H1 (cell line): ENCODE measurements at regions of chr1 and their contacts with region 1.

Region 1: DNA sequence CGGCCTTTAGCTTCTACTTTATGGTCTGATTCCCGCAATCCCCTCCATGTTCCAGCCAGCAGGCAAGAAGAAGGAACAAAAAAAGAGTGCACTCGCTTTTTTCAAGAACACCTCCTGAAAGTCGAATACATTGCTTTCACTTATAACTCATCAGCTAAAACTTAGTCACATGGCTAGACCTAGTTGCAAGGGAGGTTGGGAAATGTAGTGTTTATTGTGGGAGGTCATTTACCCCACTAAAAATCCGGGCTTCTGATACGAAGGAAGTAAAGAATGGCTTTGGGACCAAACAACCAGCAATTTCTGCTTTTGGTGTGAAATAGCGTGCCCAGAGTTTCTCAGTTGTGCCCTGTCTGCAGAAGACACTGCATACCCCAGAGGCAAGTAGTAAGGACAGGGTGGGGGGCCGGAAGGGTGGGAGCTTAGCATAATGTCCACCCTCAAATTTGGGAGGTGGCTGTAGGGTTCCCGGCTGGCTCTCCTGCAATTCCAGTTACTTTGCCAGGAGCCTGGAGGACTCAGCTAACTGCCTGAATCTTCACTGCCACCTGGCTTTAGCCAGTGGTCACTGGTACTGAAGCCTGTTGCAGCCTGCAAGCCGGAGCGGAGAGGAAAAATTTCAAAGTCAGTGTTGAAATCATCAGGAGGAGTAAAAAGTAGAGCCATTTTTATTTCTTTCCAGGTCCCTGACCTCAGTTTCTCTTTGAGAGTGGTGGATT is 57.7 kb upstream of the F3 start:
- DNase-seq: peak in 1 of 2 experiments; percentile 54
- H3K4me3 ChIP-seq: no peak overlapping the region
- H3K27ac ChIP-seq: no peak overlapping the region
- H3K4me1 ChIP-seq: no peaks in the 10 kb centered on the region
- H3K27me3 ChIP-seq: no peaks in the 10 kb centered on the region; a peak in 1 of 7 replicates
- CTCF ChIP-seq: peak; percentile 67 to 78 (median 69)
- EP300 ChIP-seq: no peak
- POLR2A ChIP-seq: no peak
- RAD21 ChIP-seq: peak; percentile 79 to 84

Region 2: DNA sequence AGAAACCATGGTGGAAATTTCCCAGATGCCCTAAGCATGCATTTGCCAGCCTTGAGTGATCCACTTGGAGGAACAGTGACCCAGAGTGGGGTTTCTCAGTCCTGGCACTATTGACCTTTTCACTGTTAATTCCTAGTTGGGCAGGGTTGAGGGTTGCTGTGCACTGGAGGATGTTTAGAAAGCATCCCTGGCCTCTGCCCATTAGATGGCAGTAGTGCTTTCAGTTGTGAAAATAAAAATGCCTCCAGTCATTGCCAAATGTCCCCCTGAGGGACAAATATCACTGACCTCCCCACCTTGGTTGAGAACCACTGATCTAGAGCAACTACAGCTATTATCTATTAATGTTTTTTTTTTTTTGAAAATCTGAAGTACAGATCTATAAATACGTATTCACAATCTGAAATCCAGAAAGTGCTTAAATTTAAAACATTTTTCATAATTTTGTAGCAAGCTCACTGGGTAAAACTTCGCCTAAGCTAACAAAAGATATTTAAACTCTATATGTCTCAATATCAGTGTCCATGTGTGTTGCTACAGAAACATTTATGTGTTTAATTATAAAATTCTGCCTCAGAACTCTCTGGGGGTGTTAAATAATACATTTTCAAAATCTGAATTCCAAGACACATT is 85.0 kb before region 1 on chr1:
- CTCF ChIA-PET with region 1: interaction called, 33 read pairs
- POLR2A ChIA-PET with region 1: no interaction called
- DNase-seq: peak in 1 of 2 experiments; percentile 49
- H3K4me3 ChIP-seq: no peak overlapping the region
- H3K27ac ChIP-seq: no peak overlapping the region
- H3K4me1 ChIP-seq: no peaks in the 10 kb centered on the region
- H3K27me3 ChIP-seq: no peaks in the 10 kb centered on the region
- CTCF ChIP-seq: peak; percentile 19 to 71 (median 66)
- EP300 ChIP-seq: no peak
- POLR2A ChIP-seq: no peak
- RAD21 ChIP-seq: peak; percentile 78 to 81

Region 3: GRCh38 chr1:94522304-94522703 is 77.0 kb before region 1 on chr1:
- CTCF ChIA-PET with region 1: interaction called, 66 read pairs
- POLR2A ChIA-PET with region 1: no interaction called
- DNase-seq: no peak
- H3K4me3 ChIP-seq: no peak overlapping the region
- H3K27ac ChIP-seq: no peak overlapping the region
- H3K4me1 ChIP-seq: peaks cover 0 to 2% (median 0%) of the 10 kb centered on the region in 4 experiments; a peak in 1 of 7 replicates
- H3K27me3 ChIP-seq: no peaks in the 10 kb centered on the region
- CTCF ChIP-seq: peak in 2 of 3 experiments; percentile 45 to 50; a peak in 2 of 4 replicates
- EP300 ChIP-seq: no peak
- POLR2A ChIP-seq: no peak
- RAD21 ChIP-seq: peak; percentile 84 to 85

Region 4: DNA sequence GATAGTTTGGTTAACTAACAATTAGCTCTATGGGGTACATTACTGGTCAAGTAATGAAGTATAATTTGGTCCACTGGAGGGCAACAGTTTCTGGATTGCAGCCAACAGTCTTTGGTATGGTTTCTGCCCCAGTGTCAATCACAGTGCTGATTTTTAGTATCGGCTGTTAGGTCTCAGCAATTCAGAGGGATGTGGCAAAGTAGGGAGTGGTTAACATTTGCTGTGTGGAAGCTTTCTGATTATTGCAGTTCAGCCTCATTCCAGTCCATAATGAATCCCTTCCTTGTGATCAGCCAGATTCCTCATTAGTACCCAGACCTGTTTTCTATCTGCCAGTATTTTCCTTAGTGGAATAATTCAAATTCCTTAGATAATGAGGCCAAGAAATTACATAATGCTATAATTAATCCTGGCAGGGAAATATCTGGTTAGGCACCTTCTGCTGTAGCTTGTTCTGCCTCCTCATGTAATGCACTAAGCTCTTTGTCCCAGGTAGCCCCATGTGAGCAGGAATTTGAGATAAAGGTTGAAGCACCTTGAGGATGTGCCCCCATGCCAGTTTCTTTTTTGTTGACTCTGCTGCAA is 71.7 kb before region 1 on chr1:
- CTCF ChIA-PET with region 1: interaction called, 66 read pairs
- POLR2A ChIA-PET with region 1: interaction called, 3 read pairs
- DNase-seq: no peak
- H3K4me3 ChIP-seq: no peak overlapping the region
- H3K27ac ChIP-seq: no peak overlapping the region
- H3K4me1 ChIP-seq: peaks cover 0 to 7% (median 3%) of the 10 kb centered on the region in 4 experiments; a peak in 3 of 7 replicates
- H3K27me3 ChIP-seq: no peaks in the 10 kb centered on the region
- CTCF ChIP-seq: peak in 1 of 3 experiments; percentile 16; a peak in 2 of 4 replicates
- EP300 ChIP-seq: no peak
- POLR2A ChIP-seq: no peak
- RAD21 ChIP-seq: peak; percentile 29 to 41; a peak in 3 of 4 replicates

Region 5: DNA sequence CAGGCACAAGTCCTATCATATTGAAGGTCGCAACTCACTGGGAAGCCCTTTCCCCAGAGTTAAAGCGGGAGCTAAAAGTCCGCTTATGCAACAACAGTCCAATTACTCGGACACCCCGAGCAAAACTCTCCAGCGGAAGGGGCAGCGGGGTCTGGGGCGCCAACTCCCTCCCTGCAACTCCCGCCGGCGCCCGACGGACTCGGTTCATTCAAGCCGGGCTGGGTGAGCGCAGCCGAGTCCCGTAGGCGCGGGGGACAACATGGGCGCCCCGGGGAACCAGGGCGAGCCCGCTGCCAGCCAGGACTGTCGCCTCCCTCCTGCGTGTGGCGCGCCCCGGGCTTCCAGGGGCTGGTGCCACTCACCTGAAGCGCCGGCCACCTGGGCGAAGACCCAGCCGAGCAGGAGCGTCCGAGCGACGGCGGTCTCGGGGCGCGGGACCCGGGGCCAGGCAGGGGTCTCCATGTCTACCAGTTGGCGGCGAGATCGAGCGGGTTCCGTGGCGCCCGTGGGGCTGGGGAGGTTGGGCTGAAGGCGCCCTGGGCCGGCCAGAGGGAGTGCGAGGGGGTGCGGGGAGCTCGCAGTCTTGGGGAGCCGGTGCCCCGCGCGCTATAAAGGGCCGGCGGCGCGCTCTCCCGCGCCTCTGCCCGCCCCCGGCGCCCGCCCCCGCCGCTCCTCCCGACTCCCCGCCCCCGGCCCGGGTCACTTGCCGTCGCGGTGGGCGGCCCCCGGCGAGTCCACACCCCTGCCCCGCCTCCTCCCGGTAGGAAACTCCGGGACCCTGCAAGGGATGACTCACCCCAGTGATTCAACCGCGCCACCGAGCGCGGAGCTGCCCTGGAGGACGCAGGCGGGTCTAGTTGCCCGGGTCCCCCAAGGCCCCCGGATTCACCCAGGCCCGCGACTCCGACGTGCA is 57.8 kb before region 1 on chr1 and contains the start of gene F3:
- CTCF ChIA-PET with region 1: interaction called, 10 read pairs
- POLR2A ChIA-PET with region 1: no interaction called
- DNase-seq: peak; percentile 50 to 88
- H3K4me3 ChIP-seq: peak within 1 kb of the TSS; percentile 62 to 82 (median 76)
- H3K27ac ChIP-seq: no peak within 1 kb of the TSS
- H3K4me1 ChIP-seq: peaks cover 2 to 6% (median 3%) of the 10 kb centered on the region in 4 experiments; a peak in 6 of 7 replicates
- H3K27me3 ChIP-seq: peaks cover 2 to 12% (median 7%) of the 10 kb centered on the region in 4 experiments; a peak in 6 of 7 replicates
- CTCF ChIP-seq: peak in 1 of 3 experiments; percentile 25; a peak in 1 of 4 replicates
- EP300 ChIP-seq: no peak
- POLR2A ChIP-seq: peak in 1 of 2 experiments; percentile 67; a peak in 2 of 3 replicates
- RAD21 ChIP-seq: no peak
- total RNA-seq, gene F3: 6.1 and 8.6 TPM in 2 replicates

Region 6: DNA sequence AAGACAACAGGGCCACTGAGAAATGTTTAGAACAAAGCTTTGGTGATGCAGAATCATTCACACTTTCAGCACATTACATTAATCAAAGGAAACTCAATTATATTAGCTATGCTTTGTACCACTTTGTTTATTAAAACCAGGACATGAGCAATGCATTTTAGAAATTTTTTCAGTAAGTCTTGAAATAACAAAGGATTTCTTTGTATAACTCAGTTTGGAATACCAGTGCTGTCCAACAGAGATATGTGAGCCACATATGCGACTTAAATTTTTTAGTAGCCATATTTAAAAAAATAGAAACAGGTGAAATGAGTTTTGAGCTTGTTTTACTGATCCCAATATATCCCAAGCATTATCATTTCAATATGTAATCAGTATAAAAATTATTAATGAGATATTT is 38.9 kb before region 1 on chr1:
- CTCF ChIA-PET with region 1: interaction called, 12 read pairs
- POLR2A ChIA-PET with region 1: no interaction called
- DNase-seq: no peak
- H3K4me3 ChIP-seq: no peak overlapping the region
- H3K27ac ChIP-seq: no peak overlapping the region
- H3K4me1 ChIP-seq: no peaks in the 10 kb centered on the region
- H3K27me3 ChIP-seq: peaks cover 0 to 1% (median 0%) of the 10 kb centered on the region in 4 experiments; a peak in 1 of 7 replicates
- CTCF ChIP-seq: no peak
- EP300 ChIP-seq: no peak
- POLR2A ChIP-seq: no peak
- RAD21 ChIP-seq: no peak

Region 7: GRCh38 chr1:94623560-94624148 is 24.4 kb after region 1 on chr1:
- CTCF ChIA-PET with region 1: interaction called, 15 read pairs
- POLR2A ChIA-PET with region 1: no interaction called
- DNase-seq: peak in 1 of 2 experiments; percentile 55
- H3K4me3 ChIP-seq: peak overlapping the region in 1 of 4 experiments; percentile 28; a peak in 1 of 8 replicates
- H3K27ac ChIP-seq: no peak overlapping the region
- H3K4me1 ChIP-seq: peaks cover 18 to 25% (median 21%) of the 10 kb centered on the region in 4 experiments
- H3K27me3 ChIP-seq: peaks cover 0 to 11% (median 6%) of the 10 kb centered on the region in 4 experiments; a peak in 6 of 7 replicates
- CTCF ChIP-seq: no peak
- EP300 ChIP-seq: no peak
- POLR2A ChIP-seq: no peak
- RAD21 ChIP-seq: no peak